ENCODE measurements at regions of chr12 and their contacts with region 1.

Region 1: DNA sequence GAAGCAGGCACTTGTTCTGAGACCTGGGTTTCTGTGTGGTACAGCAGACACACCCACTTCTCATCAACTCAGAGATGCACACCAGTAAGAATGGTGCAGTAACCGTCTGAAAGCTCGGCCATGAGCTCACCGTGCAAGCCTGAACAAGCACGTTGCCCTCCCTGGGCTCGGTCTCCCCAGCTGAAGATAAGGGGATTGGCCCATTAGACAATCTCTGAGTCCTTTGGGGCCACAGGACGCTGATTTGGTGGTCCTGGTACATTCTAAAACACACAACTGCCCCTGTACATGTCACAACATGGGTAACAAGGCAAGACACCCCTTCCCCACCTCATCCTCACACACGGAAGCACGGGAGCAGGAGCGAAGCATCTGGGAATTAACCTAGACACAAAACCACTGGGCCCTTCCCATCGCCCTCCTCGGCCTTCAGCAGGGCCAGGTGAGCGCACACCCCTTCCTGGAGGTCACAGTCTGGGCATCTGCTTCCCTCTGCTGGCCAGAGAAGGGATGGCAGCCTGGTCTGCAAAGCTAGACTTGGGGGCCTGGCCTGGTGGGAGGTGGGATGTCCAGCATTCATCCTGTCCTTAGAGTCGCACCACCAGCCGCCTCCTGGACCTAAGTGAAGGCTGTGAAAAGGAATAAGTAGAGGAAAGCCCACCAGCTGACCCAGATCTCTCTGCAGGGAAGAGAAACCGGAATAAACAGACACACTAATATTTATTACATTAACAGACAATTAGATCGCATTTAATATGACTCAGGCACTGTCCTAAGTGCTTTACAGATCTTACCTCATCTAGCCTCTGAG is 18.9 kb upstream of the SMUG1 start:
- DNase-seq: peak; percentile 49
- H3K4me3 ChIP-seq: no peak overlapping the region
- H3K27ac ChIP-seq: no peak overlapping the region
- H3K4me1 ChIP-seq: no peaks in the 10 kb centered on the region
- H3K27me3 ChIP-seq: peaks cover 17 to 35% of the 10 kb centered on the region in 2 experiments
- CTCF ChIP-seq: peak; percentile 79 to 93
- POLR2A ChIP-seq: no peak

Region 2: GRCh38 chr12:53757095-53757770 is 450.5 kb before region 1 on chr12:
- CTCF ChIA-PET with region 1: no interaction called
- POLR2A ChIA-PET with region 1: no interaction called
- dilution Hi-C with region 1: no loop called
- intact Hi-C with region 1: loop called (anchors 10 kb)
- DNase-seq: peak; percentile 63
- H3K4me3 ChIP-seq: no peak overlapping the region
- H3K27ac ChIP-seq: no peak overlapping the region
- H3K4me1 ChIP-seq: peaks cover 3% of the 10 kb centered on the region
- H3K27me3 ChIP-seq: peaks cover 55 to 64% of the 10 kb centered on the region in 2 experiments
- CTCF ChIP-seq: peak; percentile 80 to 96
- POLR2A ChIP-seq: no peak

Region 3: GRCh38 chr12:53984901-53985709 is 222.6 kb before region 1 on chr12 and contains the start of gene HOXC10:
- CTCF ChIA-PET with region 1: interaction called, 44 read pairs
- POLR2A ChIA-PET with region 1: no interaction called
- dilution Hi-C with region 1: no loop called
- intact Hi-C with region 1: no loop called
- DNase-seq: peak; percentile 71
- H3K4me3 ChIP-seq: no peak within 1 kb of the TSS
- H3K27ac ChIP-seq: no peak within 1 kb of the TSS
- H3K4me1 ChIP-seq: no peaks in the 10 kb centered on the region
- H3K27me3 ChIP-seq: peaks cover 89 to 93% of the 10 kb centered on the region in 2 experiments
- CTCF ChIP-seq: peak; percentile 47 to 72
- POLR2A ChIP-seq: no peak
- total RNA-seq, gene HOXC10: 0.44 TPM in 1 of 2 replicates, not detected in the other

Region 4: GRCh38 chr12:53995378-53996239 is 212.1 kb before region 1 on chr12:
- CTCF ChIA-PET with region 1: interaction called, 11 read pairs
- POLR2A ChIA-PET with region 1: no interaction called
- dilution Hi-C with region 1: no loop called
- intact Hi-C with region 1: no loop called
- DNase-seq: no peak
- H3K4me3 ChIP-seq: peak overlapping the region in 1 of 3 experiments; percentile 23
- H3K27ac ChIP-seq: no peak overlapping the region
- H3K4me1 ChIP-seq: no peaks in the 10 kb centered on the region
- H3K27me3 ChIP-seq: peaks cover 85 to 99% of the 10 kb centered on the region in 2 experiments
- CTCF ChIP-seq: no peak
- POLR2A ChIP-seq: no peak

Region 5: DNA sequence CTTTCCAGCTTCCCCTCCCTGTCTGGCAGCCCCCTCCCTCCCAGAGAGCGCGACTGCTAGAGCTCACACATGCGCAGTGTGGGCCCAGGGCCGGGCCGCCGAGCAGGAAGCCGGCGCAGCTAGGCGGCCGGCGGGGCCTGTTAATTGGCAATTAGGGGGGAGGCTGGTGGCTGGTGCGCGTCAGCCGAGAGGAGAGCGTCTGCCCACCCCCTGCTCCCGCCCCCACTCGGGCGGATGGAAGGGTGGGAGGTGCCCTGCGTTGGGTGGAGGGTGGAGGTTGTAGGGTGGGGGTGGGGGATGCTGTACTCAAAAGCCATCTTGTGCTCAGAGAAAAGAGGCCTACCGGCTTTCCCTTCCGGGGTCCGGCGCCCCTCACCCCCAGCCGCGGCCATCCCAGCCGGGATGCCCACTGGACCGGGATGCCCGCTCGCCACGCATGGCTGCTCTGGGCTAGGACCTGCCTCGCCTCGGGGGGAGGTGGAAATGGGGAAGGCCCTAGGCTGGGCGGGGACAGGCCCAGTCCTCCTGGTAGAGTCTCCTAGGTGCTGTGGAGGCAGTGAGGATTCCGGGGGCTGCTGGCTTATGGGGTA is 189.7 kb before region 1 on chr12:
- CTCF ChIA-PET with region 1: interaction called, 616 read pairs
- POLR2A ChIA-PET with region 1: no interaction called
- dilution Hi-C with region 1: no loop called
- intact Hi-C with region 1: no loop called
- DNase-seq: peak; percentile 65
- H3K4me3 ChIP-seq: peak overlapping the region in 1 of 3 experiments; percentile 30
- H3K27ac ChIP-seq: no peak overlapping the region
- H3K4me1 ChIP-seq: peaks cover 3% of the 10 kb centered on the region
- H3K27me3 ChIP-seq: peaks cover 84 to 93% of the 10 kb centered on the region in 2 experiments
- CTCF ChIP-seq: no peak
- POLR2A ChIP-seq: no peak

Region 6: GRCh38 chr12:54032627-54033100 is 175.0 kb before region 1 on chr12 and contains the start of gene HOXC5:
- CTCF ChIA-PET with region 1: interaction called, 91 read pairs
- POLR2A ChIA-PET with region 1: no interaction called
- dilution Hi-C with region 1: no loop called
- intact Hi-C with region 1: no loop called
- DNase-seq: peak; percentile 37
- H3K4me3 ChIP-seq: no peak within 1 kb of the TSS
- H3K27ac ChIP-seq: no peak within 1 kb of the TSS
- H3K4me1 ChIP-seq: no peaks in the 10 kb centered on the region
- H3K27me3 ChIP-seq: peaks cover 79 to 88% of the 10 kb centered on the region in 2 experiments
- CTCF ChIP-seq: peak; percentile 79 to 81
- POLR2A ChIP-seq: no peak
- total RNA-seq, gene HOXC5: not detected in 2 replicates

Region 7: DNA sequence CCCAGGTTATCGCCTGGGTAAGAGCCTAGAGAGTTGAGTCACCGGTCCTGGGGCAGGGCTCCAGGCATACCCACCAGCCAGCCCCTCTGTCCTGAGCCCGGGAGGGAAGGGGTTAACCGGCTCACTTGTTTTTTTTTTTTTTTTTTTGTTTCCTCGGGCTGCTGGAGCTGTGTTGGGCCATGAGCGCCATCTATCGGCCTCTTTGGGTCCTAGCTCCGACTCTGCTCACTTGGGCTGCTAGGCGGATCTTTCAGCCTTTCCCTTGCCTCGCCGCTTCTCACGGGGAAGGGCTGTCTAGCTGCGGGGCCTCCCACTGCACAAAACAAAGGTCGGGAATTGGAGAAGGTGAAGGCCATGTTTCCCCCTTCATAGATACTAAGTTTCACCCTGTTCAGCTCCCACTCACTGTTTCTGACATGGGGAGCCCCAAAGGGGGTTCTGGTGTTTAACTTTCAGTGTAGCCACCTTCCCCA is 16.1 kb before region 1 on chr12:
- CTCF ChIA-PET with region 1: interaction called, 108 read pairs
- POLR2A ChIA-PET with region 1: no interaction called
- dilution Hi-C with region 1: no loop called
- intact Hi-C with region 1: no loop called
- DNase-seq: peak; percentile 75
- H3K4me3 ChIP-seq: no peak overlapping the region
- H3K27ac ChIP-seq: no peak overlapping the region
- H3K4me1 ChIP-seq: no peaks in the 10 kb centered on the region
- H3K27me3 ChIP-seq: peaks cover 30 to 33% of the 10 kb centered on the region in 2 experiments
- CTCF ChIP-seq: peak; percentile 75 to 94
- POLR2A ChIP-seq: no peak